Activated T-helper 1 cell treated with anti-CD3 and anti-CD28 coated beads, Interleukin-12 subunit alpha, Interleukin-12 subunit beta, Interleukin-2, Interleukin-4 antibody, amounts not matched to agents 30 ng/mL and 10 ng/mL and 1 ng/mL, durations not matched to agents 14 hours and 24 hours and 36 hours (primary cell): ENCODE measurements at regions of chr4 and their contacts with region 1.

Region 1: GRCh38 chr4:77538560-77539157 is 67.0 kb upstream of the CXCL13 start:
- DNase-seq: no peak
- H3K4me3 Mint-ChIP-seq: peak overlapping the region; percentile 20
- H3K27ac Mint-ChIP-seq: peak overlapping the region; percentile 88
- H3K4me1 Mint-ChIP-seq: peaks cover 40% of the 10 kb centered on the region
- H3K27me3 Mint-ChIP-seq: peaks cover 5% of the 10 kb centered on the region

Region 2: DNA sequence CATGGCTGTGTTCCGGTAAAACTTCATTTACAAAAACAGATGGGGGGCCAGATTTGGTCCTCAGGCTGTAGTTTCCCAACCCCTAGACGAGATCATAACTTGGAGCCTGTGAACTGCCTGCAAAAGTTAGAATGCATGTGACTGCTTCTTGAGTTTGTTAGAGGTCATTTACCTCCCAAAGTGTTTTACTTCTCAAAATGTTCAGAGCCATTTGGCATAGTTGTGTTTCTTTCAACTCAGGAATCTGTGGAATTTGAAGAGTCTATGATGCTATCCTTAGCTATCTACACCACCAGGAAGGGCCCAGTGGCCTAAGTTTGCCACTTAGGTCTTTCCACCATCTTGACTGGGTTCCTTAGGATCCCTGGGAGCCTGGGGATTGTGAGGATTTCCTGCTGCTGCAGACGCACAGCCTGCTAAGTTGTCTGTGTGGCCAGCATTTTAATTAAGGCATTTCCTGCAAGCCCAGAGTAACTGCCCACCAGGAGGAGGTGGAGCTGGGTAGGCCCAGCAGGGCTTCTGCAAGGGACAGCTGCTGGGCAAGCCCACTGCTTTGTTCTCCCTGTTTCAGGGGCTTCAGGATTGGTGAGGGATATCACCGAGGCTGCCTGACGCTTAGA is 516.0 kb before region 1 on chr4:
- intact Hi-C with region 1: loop called (anchors 1 kb)
- DNase-seq: no peak
- H3K4me3 Mint-ChIP-seq: no peak overlapping the region
- H3K27ac Mint-ChIP-seq: no peak overlapping the region
- H3K4me1 Mint-ChIP-seq: peaks cover 21% of the 10 kb centered on the region
- H3K27me3 Mint-ChIP-seq: peaks cover 5% of the 10 kb centered on the region

Region 3: DNA sequence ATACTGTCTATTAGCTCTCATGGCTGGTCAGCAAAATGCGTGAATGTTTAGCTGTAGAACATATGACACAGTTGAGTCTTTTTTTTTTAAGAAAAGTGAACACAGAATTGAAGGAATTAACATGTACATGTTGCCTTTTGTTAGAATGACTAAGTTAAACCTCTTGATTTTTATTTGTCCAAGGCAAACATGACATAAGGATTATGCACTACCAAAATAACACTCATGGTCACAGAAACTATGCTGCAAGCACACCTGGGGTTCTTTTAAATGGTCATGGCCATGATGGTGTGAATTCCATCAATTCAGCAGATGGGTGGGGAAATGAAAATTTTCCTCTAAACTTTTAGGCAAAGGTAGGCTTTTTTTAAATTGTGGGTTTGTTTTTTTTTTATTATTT is 13.1 kb before region 1 on chr4:
- intact Hi-C with region 1: loop called (anchors 2 kb)
- DNase-seq: no peak
- H3K4me3 Mint-ChIP-seq: no peak overlapping the region
- H3K27ac Mint-ChIP-seq: no peak overlapping the region
- H3K4me1 Mint-ChIP-seq: peaks cover 5% of the 10 kb centered on the region
- H3K27me3 Mint-ChIP-seq: peaks cover 6% of the 10 kb centered on the region

Region 4: GRCh38 chr4:77593993-77594392 is 55.3 kb after region 1 on chr4:
- intact Hi-C with region 1: loop called (anchors 1 kb)
- DNase-seq: no peak
- H3K4me3 Mint-ChIP-seq: peak overlapping the region; percentile 15
- H3K27ac Mint-ChIP-seq: peak overlapping the region; percentile 82
- H3K4me1 Mint-ChIP-seq: peaks cover 53% of the 10 kb centered on the region
- H3K27me3 Mint-ChIP-seq: peaks cover 1% of the 10 kb centered on the region

Region 5: GRCh38 chr4:77862478-77863216 is 324.0 kb after region 1 on chr4 and contains the start of gene MRPL1:
- intact Hi-C with region 1: loop called (anchors 2 kb)
- DNase-seq: peak; percentile 84
- H3K4me3 Mint-ChIP-seq: peak within 1 kb of the TSS; percentile 90
- H3K27ac Mint-ChIP-seq: peak within 1 kb of the TSS; percentile 94
- H3K4me1 Mint-ChIP-seq: peaks cover 48% of the 10 kb centered on the region
- H3K27me3 Mint-ChIP-seq: no peaks in the 10 kb centered on the region
- total RNA-seq, gene MRPL1: 72.7 and 75.0 TPM in 2 replicates